Natural killer cell (primary cell): ENCODE measurements at regions of chrX and their contacts with region 1.

Region 1: GRCh38 chrX:56802921-56803849 is 74.1 kb downstream of the NBDY start:
- DNase-seq: peak; percentile 34 to 71
- ATAC-seq: peak in 2 of 3 donors; percentile 48 to 76
- H3K4me3 ChIP-seq: no peak overlapping the region
- H3K4me3 Mint-ChIP-seq: peak overlapping the region; percentile 88
- H3K27ac ChIP-seq: no peak overlapping the region
- H3K27ac Mint-ChIP-seq: no peak overlapping the region
- H3K4me1 ChIP-seq: peaks cover 39% of the 10 kb centered on the region
- H3K4me1 Mint-ChIP-seq: peaks cover 18 to 34% of the 10 kb centered on the region in 2 donors
- H3K27me3 ChIP-seq: no peaks in the 10 kb centered on the region
- H3K27me3 Mint-ChIP-seq: no peaks in the 10 kb centered on the region
- CTCF ChIP-seq: peak; percentile 9

Region 2: GRCh38 chrX:56729152-56729850 is 73.9 kb before region 1 on chrX and contains the start of gene NBDY:
- intact Hi-C with region 1: no loop called
- DNase-seq: peak; percentile 16 to 65
- ATAC-seq: peak; percentile 58 to 66 (median 66)
- H3K4me3 ChIP-seq: peak within 1 kb of the TSS; percentile 58
- H3K4me3 Mint-ChIP-seq: peak within 1 kb of the TSS; percentile 92
- H3K27ac ChIP-seq: peak within 1 kb of the TSS; percentile 74
- H3K27ac Mint-ChIP-seq: peak within 1 kb of the TSS; percentile 63 to 90
- H3K4me1 ChIP-seq: peaks cover 11% of the 10 kb centered on the region
- H3K4me1 Mint-ChIP-seq: peaks cover 9 to 13% of the 10 kb centered on the region in 2 donors
- H3K27me3 ChIP-seq: no peaks in the 10 kb centered on the region
- H3K27me3 Mint-ChIP-seq: peaks cover 0 to 6% of the 10 kb centered on the region in 2 donors
- CTCF ChIP-seq: no peak
- total RNA-seq, gene NBDY: 16.0 to 23.6 (median 16.6) TPM

Region 3: DNA sequence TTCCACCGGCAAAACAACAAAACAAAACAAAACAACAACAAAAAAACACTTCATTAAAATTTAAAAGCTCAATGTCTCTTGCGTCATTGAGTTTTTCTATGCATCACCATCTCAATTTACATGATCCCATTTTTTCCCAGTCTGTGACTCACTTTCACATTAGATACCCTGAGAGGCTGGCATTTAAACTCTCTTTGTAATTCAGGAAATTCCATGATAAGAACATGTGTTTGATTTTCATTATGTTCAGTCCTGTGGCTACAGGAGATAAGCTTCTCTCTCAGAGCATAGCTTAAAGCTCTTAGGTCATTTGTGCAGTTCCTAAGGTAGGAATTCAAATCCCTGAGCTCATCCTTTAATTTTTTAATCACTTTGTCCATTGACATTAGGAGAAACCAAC is 30.4 kb after region 1 on chrX:
- intact Hi-C with region 1: no loop called
- DNase-seq: no peak
- ATAC-seq: no peak
- H3K4me3 ChIP-seq: no peak overlapping the region
- H3K4me3 Mint-ChIP-seq: no peak overlapping the region
- H3K27ac ChIP-seq: no peak overlapping the region
- H3K27ac Mint-ChIP-seq: no peak overlapping the region
- H3K4me1 ChIP-seq: no peaks in the 10 kb centered on the region
- H3K4me1 Mint-ChIP-seq: no peaks in the 10 kb centered on the region
- H3K27me3 ChIP-seq: no peaks in the 10 kb centered on the region
- H3K27me3 Mint-ChIP-seq: peaks cover 0 to 28% of the 10 kb centered on the region in 2 donors
- CTCF ChIP-seq: no peak

Region 4: GRCh38 chrX:56978172-56978571 is 175.0 kb after region 1 on chrX:
- intact Hi-C with region 1: loop called (anchors 1 kb)
- DNase-seq: peak in 1 of 2 donors; percentile 74
- ATAC-seq: peak; percentile 67 to 78 (median 72)
- H3K4me3 ChIP-seq: no peak overlapping the region
- H3K4me3 Mint-ChIP-seq: no peak overlapping the region
- H3K27ac ChIP-seq: no peak overlapping the region
- H3K27ac Mint-ChIP-seq: no peak overlapping the region
- H3K4me1 ChIP-seq: no peaks in the 10 kb centered on the region
- H3K4me1 Mint-ChIP-seq: no peaks in the 10 kb centered on the region
- H3K27me3 ChIP-seq: no peaks in the 10 kb centered on the region
- H3K27me3 Mint-ChIP-seq: no peaks in the 10 kb centered on the region
- CTCF ChIP-seq: peak; percentile 51